Activated B cell treated with CpG ODN at 0.5 μM for 24 hours (primary cell): ENCODE measurements at regions of chr7 and their contacts with region 1.

Region 1: DNA sequence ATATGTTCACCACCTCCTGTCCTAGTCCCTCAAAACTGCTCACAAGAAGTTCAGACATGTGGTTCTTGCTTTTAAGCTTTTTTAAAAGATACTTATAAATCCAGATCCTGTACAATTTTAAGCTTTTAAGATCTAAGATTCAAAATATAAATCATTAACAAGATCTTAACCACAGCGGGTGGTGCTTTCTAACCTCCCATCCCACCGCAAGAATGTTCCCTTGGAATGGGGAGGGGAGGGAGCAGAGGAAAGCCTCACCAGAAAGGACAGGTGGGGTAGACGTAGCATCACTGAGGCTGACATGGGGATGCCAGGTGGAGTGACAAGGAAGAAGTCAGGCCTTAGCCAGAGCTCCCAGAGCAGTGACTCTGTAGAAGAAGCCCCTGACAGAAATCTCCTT is 133.5 kb downstream of the C1GALT1 start:
- DNase-seq: no peak
- ATAC-seq: no peak
- H3K4me3 Mint-ChIP-seq: no peak overlapping the region
- H3K27ac Mint-ChIP-seq: no peak overlapping the region
- H3K4me1 Mint-ChIP-seq: no peaks in the 10 kb centered on the region
- H3K27me3 Mint-ChIP-seq: peaks cover 2% of the 10 kb centered on the region
- CTCF ChIP-seq: no peak

Region 2: DNA sequence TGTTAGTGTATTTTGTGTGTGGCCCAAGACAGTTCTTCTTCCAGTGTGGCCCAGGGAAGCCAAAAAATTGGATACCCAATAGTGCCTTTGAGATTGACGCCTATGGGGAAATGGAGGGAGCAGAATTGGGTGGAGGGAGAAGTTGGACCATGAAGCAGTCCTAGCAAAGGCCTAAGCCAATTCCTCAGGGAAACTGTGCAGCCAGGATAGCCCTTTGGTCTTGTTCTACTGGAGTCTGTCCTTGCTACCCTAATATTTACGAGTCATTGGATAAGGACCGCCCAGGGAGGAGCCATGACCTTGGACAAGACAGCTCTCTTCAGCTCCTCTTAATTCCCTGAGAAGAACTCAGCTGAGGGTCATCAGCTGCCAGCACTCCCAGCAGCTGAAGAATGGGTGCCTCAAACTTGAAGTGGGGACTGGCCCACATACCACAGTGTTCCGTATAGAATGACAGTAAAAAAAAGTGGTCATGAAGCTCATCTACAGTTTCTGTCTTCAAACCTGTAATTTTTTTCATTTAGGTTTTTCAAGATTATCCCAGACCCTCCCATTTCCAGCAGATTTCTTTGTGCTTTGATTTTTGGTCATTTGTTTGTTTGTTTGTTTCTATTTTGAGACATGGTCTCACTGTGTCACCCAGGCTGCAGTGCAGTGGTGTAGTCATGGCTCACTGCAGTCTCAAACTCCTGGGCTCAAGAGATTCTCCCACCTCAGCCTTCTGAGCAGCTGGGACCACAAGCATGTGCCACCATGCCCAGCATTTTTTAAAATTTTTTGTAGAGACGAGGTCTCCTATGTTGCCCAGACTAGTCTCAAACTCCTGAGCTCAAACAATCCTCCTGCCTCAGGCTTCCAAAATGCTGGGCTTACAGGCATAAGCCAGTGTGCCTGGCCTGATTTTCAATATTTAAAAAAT is 52.3 kb before region 1 on chr7:
- CTCF ChIA-PET with region 1: no interaction called
- POLR2A ChIA-PET with region 1: no interaction called
- intact Hi-C with region 1: loop called (anchors 5 kb)
- DNase-seq: no peak
- ATAC-seq: no peak
- H3K4me3 Mint-ChIP-seq: no peak overlapping the region
- H3K27ac Mint-ChIP-seq: no peak overlapping the region
- H3K4me1 Mint-ChIP-seq: peaks cover 19% of the 10 kb centered on the region
- H3K27me3 Mint-ChIP-seq: no peaks in the 10 kb centered on the region
- CTCF ChIP-seq: no peak

Region 3: GRCh38 chr7:7449055-7449454 is 133.2 kb after region 1 on chr7:
- CTCF ChIA-PET with region 1: no interaction called
- POLR2A ChIA-PET with region 1: no interaction called
- intact Hi-C with region 1: no loop called
- DNase-seq: no peak
- ATAC-seq: no peak
- H3K4me3 Mint-ChIP-seq: no peak overlapping the region
- H3K27ac Mint-ChIP-seq: no peak overlapping the region
- H3K4me1 Mint-ChIP-seq: no peaks in the 10 kb centered on the region
- H3K27me3 Mint-ChIP-seq: no peaks in the 10 kb centered on the region
- CTCF ChIP-seq: no peak